ENCODE measurements at regions of chr14 and their contacts with region 1.

Region 1: DNA sequence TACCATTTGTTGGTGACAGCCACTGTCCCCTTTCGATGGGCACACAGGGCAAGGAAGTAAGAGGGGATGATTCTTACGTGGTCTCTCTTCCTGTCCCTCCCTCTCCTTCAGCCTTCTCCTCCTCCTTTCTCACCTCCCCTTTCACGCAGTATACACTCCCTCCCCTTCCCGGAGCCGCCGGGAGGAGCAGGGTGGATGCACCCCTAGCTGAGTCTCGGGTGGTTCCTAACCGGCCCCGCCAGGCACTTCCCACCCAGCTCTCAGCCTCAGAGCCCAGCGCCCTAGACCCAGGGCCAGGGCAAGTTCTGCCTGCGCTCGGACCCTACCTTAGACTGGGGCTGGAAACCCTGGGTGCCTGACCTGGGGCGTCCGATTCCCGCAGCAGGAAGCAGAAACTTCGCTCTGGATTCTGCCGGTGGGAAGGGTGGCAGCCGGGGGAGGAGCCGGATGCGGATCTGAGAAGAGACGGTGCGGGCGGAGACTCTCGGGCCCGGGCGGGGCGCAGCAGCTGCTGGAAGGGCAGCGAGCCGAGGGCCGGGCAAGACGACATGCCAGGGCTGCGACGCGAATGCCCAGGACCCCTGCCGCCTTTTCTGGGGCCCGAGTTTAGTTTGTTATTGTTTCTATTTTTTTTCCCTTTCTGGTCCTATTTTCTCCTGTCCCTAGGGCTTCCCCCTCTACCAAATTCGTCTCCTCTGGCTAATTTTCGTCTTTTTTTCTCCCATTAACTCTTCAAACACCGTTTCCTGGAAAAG is at the start of gene TEP1:
- DNase-seq: peak; percentile 95
- H3K4me3 ChIP-seq: peak within 1 kb of the TSS; percentile 62
- H3K27ac ChIP-seq: peak within 1 kb of the TSS; percentile 98
- H3K4me1 ChIP-seq: peaks cover 10% of the 10 kb centered on the region
- H3K27me3 ChIP-seq: no peaks in the 10 kb centered on the region
- CTCF ChIP-seq: no peak
- total RNA-seq, gene TEP1: 53.7 to 71.3 TPM

Region 2: GRCh38 chr14:20454516-20455354 is 41.5 kb after region 1 on chr14 and contains the starts of genes APEX1 and OSGEP:
- intact Hi-C with region 1: loop called (anchors 5 kb)
- DNase-seq: peak; percentile 99
- H3K4me3 ChIP-seq: peak within 1 kb of the TSS; percentile 69
- H3K27ac ChIP-seq: peak within 1 kb of the TSS; percentile 97
- H3K4me1 ChIP-seq: peaks cover 9% of the 10 kb centered on the region
- H3K27me3 ChIP-seq: no peaks in the 10 kb centered on the region
- CTCF ChIP-seq: no peak
- total RNA-seq, gene APEX1: 119 to 169 TPM
- total RNA-seq, gene OSGEP: 26.9 to 42.0 TPM

Region 3: GRCh38 chr14:20469890-20470602 is 56.8 kb after region 1 on chr14:
- intact Hi-C with region 1: loop called (anchors 5 kb)
- DNase-seq: peak; percentile 65
- H3K4me3 ChIP-seq: peak overlapping the region; percentile 93
- H3K27ac ChIP-seq: peak overlapping the region; percentile 99
- H3K4me1 ChIP-seq: peaks cover 3% of the 10 kb centered on the region
- H3K27me3 ChIP-seq: no peaks in the 10 kb centered on the region
- CTCF ChIP-seq: no peak

Region 4: DNA sequence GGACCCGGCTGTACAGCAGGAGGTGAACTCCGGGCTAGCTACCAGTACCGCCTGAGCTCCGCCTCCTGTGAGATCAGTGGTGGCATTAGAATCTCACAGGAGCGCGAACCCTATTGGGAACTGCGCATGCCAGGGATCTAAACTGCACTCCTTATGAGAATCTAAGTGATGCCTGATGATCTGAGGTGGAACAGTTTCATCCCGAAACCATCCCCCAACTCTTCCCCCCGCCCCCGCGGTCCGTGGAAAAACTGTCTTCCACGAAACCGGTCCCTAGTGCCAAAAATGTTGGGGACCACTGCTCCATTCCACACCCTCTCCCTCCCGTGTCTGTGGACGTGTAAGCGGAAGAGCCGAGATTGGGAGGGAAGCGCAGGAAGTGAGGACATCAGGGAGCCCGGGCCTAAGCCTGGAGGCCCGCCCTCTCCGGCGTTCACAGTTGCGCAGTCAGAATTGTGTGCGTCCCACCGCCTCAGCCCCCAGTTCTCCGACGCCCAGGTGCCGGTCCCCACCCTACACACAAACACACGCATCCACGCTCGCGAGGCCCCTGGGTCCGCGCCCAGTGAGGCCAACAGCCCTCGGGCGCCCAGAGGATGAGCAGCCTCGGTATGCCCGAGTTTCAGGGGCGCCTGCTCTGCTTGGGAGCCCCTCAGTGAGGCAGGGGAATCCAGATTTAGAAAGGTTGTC is 269.4 kb after region 1 on chr14:
- intact Hi-C with region 1: loop called (anchors 10 kb)
- DNase-seq: peak; percentile 89
- H3K4me3 ChIP-seq: peak overlapping the region; percentile 53
- H3K27ac ChIP-seq: peak overlapping the region; percentile 100
- H3K4me1 ChIP-seq: peaks cover 7% of the 10 kb centered on the region
- H3K27me3 ChIP-seq: no peaks in the 10 kb centered on the region
- CTCF ChIP-seq: no peak